Activated naive CD4-positive, alpha-beta T cell treated with anti-CD3 and anti-CD28 coated beads, Interleukin-2, amount 10 ng/mL, durations not matched to agents 7 days and 5 days (primary cell): ENCODE measurements at regions of chr17 and their contacts with region 1.

Region 1: DNA sequence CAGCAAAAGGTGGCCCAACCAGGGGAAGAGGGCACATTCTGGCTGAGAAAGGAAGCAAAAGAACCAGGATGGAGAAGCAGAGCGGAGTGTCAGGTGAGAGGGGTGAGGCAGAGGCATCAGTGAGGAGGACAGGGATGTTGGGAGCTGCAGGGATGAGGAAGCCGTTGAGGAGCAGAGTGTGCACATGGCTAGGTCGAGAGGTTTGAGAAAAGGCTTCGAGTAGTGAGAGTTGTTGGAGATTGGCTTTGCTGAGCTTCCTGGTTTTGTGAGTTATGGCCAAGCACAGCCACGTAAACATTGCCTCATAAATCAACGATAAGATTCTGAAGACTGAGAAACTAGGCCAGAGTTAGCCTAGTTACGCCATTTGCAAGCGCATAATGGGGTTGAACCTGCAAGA is 26.9 kb downstream of the DNAH2 start:
- DNase-seq: no peak
- H3K4me3 Mint-ChIP-seq: no peak overlapping the region
- H3K27ac Mint-ChIP-seq: no peak overlapping the region
- H3K4me1 Mint-ChIP-seq: no peaks in the 10 kb centered on the region
- H3K27me3 Mint-ChIP-seq: peaks cover 54% of the 10 kb centered on the region

Region 2: GRCh38 chr17:7729816-7730215 is 14.6 kb before region 1 on chr17:
- CTCF ChIA-PET with region 1: interaction called, 11 read pairs
- DNase-seq: no peak
- H3K4me3 Mint-ChIP-seq: no peak overlapping the region
- H3K27ac Mint-ChIP-seq: no peak overlapping the region
- H3K4me1 Mint-ChIP-seq: no peaks in the 10 kb centered on the region
- H3K27me3 Mint-ChIP-seq: peaks cover 29% of the 10 kb centered on the region

Region 3: GRCh38 chr17:7794075-7794663 is 49.8 kb after region 1 on chr17:
- CTCF ChIA-PET with region 1: no interaction called
- DNase-seq: no peak
- H3K4me3 Mint-ChIP-seq: no peak overlapping the region
- H3K27ac Mint-ChIP-seq: no peak overlapping the region
- H3K4me1 Mint-ChIP-seq: no peaks in the 10 kb centered on the region
- H3K27me3 Mint-ChIP-seq: peaks cover 15% of the 10 kb centered on the region

Region 4: DNA sequence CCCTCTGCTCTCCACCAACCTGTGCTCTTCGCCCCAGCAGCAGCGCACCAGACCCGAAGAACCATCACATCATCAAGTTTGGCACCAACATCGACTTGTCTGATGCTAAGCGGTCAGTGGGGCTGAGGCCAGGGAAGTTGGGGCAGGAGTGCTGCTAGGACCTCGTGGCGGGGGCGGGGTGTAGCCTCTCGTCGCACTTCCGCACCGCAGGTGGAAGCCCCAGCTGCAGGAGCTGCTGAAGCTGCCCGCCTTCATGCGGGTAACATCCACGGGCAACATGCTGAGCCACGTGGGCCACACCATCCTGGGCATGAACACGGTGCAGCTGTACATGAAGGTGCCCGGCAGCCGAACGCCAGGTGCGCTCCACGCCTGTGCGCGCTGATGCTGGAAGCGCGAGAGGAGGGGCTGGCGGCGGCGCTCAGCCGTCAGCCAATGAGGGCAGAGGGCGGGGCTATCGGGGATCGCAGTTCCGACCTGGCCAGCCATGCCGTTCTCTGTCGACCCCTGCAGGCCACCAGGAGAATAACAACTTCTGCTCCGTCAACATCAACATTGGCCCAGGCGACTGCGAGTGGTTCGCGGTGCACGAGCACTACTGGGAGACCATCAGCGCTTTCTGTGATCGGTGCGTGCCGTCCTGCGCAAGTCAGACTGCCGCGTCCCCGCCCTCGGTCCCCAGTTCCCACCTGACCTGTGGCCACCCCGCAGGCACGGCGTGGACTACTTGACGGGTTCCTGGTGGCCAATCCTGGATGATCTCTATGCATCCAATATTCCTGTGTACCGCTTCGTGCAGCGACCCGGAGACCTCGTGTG is 107.2 kb after region 1 on chr17:
- CTCF ChIA-PET with region 1: interaction called, 10 read pairs
- DNase-seq: peak; percentile 97
- H3K4me3 Mint-ChIP-seq: peak overlapping the region; percentile 78
- H3K27ac Mint-ChIP-seq: peak overlapping the region; percentile 65
- H3K4me1 Mint-ChIP-seq: peaks cover 33% of the 10 kb centered on the region
- H3K27me3 Mint-ChIP-seq: no peaks in the 10 kb centered on the region

Region 5: GRCh38 chr17:7997186-7997585 is 252.8 kb after region 1 on chr17:
- CTCF ChIA-PET with region 1: interaction called, 10 read pairs
- DNase-seq: peak; percentile 73
- H3K4me3 Mint-ChIP-seq: no peak overlapping the region
- H3K27ac Mint-ChIP-seq: no peak overlapping the region
- H3K4me1 Mint-ChIP-seq: peaks cover 14% of the 10 kb centered on the region
- H3K27me3 Mint-ChIP-seq: peaks cover 68% of the 10 kb centered on the region

Region 6: DNA sequence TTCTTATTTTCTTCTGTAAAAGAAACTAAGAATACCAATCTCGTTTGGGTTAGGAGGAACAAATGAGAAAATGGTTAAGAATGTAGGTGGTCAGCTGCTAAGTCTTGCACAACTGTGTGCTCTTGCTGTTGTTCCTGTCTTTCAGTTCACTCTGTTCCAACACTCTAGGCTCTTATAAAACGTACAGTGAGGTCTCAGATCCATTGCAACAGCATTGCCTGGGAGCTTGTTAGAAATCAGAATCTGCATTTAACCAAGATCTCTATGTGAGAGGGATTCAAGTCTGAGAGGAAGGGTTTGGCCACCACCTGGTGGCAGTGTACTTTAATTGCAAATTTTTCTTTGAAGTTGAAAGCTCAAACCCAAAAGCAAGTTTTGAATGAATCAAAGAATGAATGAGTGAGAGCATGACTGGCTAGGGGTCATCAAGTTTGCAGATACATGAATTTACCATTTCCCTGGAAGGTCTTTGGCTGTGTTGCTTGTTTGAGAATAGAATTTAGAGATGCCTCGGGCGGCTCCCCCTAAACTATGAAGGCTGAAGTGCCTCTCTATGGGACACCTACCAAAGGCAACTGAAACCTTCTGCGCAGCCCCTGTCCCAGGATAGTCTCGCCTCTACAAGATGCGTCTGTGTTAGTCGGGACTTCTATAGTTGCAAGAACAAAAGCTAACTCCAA is 297.0 kb after region 1 on chr17:
- CTCF ChIA-PET with region 1: interaction called, 20 read pairs
- DNase-seq: peak; percentile 67
- H3K4me3 Mint-ChIP-seq: no peak overlapping the region
- H3K27ac Mint-ChIP-seq: no peak overlapping the region
- H3K4me1 Mint-ChIP-seq: no peaks in the 10 kb centered on the region
- H3K27me3 Mint-ChIP-seq: peaks cover 59% of the 10 kb centered on the region